Aorta (tissue), 5 donors: ENCODE measurements at regions of chr15 and their contacts with region 1.

Region 1: GRCh38 chr15:54960266-54960665 is 236.5 kb downstream of the RSL24D1 start:
- DNase-seq: no peak
- ATAC-seq: no peak
- H3K4me3 ChIP-seq: no peak overlapping the region
- H3K27ac ChIP-seq: peak overlapping the region; percentile 89 to 97
- H3K4me1 ChIP-seq: peaks cover 2 to 8% of the 10 kb centered on the region in 2 donors
- H3K27me3 ChIP-seq: no peaks in the 10 kb centered on the region

Region 2: GRCh38 chr15:54540721-54541120 is 419.5 kb before region 1 on chr15:
- intact Hi-C with region 1: loop called in 1 of 2 experiments (anchors 5 kb)
- DNase-seq: no peak
- ATAC-seq: no peak
- H3K4me3 ChIP-seq: no peak overlapping the region
- H3K27ac ChIP-seq: no peak overlapping the region
- H3K4me1 ChIP-seq: peaks cover 0 to 2% of the 10 kb centered on the region in 2 donors
- H3K27me3 ChIP-seq: no peaks in the 10 kb centered on the region

Region 3: DNA sequence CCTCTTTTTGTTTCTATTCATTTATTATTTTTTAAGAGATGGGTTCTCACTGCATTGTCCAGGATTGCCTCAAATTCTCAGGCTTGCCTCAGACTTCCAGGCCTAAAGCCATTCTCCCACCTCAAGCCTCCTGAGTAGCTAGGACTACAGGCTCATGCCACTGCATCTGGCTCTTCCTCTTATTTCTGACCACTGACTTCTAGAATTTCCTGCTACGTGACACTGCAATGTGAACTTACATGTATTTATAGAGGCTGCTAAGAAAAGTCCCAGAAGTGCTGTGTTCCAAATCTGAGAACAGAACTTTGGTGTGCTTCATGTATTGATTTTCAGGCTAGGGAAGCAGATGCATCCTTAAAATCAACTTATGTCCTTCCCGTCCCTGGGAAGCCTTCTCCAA is 170.9 kb before region 1 on chr15:
- intact Hi-C with region 1: loop called in 1 of 2 experiments (anchors 10 kb)
- DNase-seq: peak in 1 of 2 donors; percentile 21
- ATAC-seq: no peak
- H3K4me3 ChIP-seq: no peak overlapping the region
- H3K27ac ChIP-seq: peak overlapping the region in 1 of 2 donors; percentile 75
- H3K4me1 ChIP-seq: no peaks in the 10 kb centered on the region
- H3K27me3 ChIP-seq: no peaks in the 10 kb centered on the region

Region 4: DNA sequence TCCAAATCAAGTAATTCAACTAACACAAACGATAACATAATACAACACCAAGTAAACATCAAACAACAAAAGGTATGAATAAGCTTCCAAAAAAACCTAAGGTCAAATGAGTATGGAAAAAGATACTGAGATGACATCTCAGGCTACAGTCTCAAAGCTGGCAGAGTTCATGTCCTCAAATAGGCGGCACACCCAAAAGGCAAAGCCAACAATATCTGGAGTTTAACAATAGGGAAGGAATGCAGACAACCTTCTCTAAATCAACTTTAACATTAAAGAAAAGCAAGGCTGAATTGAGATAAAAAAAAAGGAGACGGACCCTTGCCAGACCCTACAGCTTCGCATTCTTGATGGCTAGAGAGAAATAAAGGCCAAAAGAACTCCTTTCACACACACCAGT is 110.1 kb before region 1 on chr15:
- intact Hi-C with region 1: no loop called
- DNase-seq: no peak
- ATAC-seq: no peak
- H3K4me3 ChIP-seq: no peak overlapping the region
- H3K27ac ChIP-seq: no peak overlapping the region
- H3K4me1 ChIP-seq: no peaks in the 10 kb centered on the region
- H3K27me3 ChIP-seq: no peaks in the 10 kb centered on the region